ENCODE measurements at regions of chr17 and their contacts with region 1.

Region 1: GRCh38 chr17:48259694-48260291 is 152.2 kb downstream of the SNX11 start:
- H3K4me3 ChIP-seq: no peak overlapping the region
- H3K27ac ChIP-seq: no peak overlapping the region
- H3K4me1 ChIP-seq: peaks cover 6% of the 10 kb centered on the region
- CTCF ChIP-seq: peak; percentile 85

Region 2: GRCh38 chr17:47615766-47616424 is 643.9 kb before region 1 on chr17:
- CTCF ChIA-PET with region 1: no interaction called
- POLR2A ChIA-PET with region 1: no interaction called
- H3K4me3 ChIP-seq: no peak overlapping the region
- H3K27ac ChIP-seq: no peak overlapping the region
- H3K4me1 ChIP-seq: peaks cover 11% of the 10 kb centered on the region
- CTCF ChIP-seq: peak; percentile 41; the same call in 1 of the 2 replicates

Region 3: DNA sequence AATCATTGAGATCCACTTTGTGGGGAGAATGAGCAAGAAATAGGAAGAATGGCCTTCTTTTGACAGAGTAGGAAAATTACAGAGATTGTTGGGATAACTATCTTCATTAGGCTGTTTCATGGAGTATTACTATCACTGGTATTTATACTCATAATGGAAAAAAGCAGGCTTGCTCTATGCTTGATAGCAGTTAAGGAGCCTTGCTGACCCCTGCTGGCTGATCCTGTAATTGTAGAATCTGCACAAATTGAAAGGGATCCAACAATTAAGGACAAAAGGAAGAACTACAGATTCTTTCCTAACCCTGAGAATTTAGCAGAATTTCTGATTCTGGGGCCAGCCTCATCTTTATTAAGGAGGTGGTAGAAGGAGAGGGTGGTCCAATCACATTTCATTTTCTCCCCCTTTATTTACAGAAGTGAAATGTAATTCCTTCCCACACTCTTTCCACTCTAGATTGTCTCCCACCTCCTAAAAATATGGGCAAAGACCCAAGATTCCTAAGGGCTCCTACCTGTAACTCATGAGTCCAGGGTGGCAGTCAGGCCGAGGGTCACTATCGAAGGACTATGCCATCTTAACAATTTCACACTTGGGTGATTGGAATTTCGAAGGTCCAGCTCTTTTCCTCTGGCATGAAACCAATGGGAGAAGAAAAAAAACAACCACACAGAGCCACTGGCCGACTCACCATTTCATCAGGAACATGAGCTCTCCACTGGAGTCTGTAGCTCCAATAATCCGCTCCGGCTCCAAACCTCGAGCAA is 185.3 kb before region 1 on chr17:
- CTCF ChIA-PET with region 1: no interaction called
- POLR2A ChIA-PET with region 1: no interaction called
- H3K4me3 ChIP-seq: no peak overlapping the region
- H3K27ac ChIP-seq: peak overlapping the region; percentile 44; the same call in 1 of the 2 replicates
- H3K4me1 ChIP-seq: no peaks in the 10 kb centered on the region
- CTCF ChIP-seq: peak; percentile 23; the same call in 1 of the 2 replicates

Region 4: DNA sequence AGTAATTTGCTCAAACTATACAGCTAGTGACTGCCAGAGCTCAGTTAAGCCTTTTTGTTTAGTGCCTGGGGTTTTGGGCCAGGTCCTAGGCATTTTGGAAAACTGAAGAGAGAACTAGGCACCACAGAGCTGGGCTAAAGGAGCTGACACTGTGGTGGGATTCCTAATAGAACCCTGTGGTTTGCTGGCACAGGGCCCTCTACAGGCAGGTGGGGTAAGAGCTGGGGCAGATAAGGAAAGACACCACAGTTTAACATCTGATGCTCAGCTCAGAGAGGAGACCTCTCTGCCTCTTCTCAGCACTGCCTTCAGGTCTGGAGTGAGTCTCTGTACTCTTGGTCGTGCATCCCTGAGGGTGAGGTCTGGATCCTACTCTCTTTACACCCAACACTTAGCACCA is 31.1 kb before region 1 on chr17:
- CTCF ChIA-PET with region 1: interaction called, 32 read pairs
- POLR2A ChIA-PET with region 1: no interaction called
- H3K4me3 ChIP-seq: no peak overlapping the region
- H3K27ac ChIP-seq: no peak overlapping the region
- H3K4me1 ChIP-seq: no peaks in the 10 kb centered on the region
- CTCF ChIP-seq: no peak

Region 5: DNA sequence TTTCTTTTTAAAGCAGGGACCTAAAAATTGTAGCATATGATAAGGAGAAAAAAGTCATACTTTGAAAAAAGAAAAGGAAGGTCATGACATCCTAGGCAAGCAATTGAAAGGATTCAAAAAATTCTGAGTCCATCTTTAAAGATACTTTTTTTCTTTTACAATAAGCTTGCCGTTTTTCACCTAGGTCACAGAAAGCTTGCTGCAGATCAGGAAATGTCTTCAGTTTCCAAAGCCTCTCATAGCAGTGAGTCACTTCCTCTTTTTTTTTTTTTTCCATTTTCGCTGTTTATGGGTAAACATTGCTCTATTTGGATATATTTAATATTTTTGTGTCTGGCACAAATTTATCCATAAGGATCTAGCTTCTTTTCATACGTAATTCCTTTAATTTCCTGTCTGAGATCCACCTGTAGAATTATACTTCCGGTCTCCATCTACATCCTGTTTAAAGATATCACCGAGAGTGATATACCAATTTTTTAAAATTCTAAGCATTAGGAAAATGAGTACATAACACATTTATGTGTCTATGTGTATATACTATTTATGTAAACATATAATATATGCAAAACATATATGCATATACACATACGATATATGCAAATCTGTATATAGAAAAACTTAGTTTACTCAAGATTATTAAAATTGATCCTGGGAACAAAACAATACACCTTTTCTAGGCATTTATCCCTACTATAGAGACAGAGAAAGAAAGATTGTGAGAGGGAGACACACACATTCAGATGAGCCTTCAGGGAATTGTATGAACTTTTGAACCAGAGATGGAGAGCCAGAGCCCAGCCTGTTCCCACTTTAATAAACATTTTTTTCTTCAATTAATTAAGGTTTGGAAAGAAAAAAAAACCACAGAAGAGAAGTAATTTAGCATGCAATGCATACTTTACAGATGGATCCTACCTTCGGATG is 35.8 kb after region 1 on chr17:
- CTCF ChIA-PET with region 1: interaction called, 33 read pairs
- POLR2A ChIA-PET with region 1: no interaction called
- H3K4me3 ChIP-seq: no peak overlapping the region
- H3K27ac ChIP-seq: no peak overlapping the region
- H3K4me1 ChIP-seq: peaks cover 3% of the 10 kb centered on the region; the same call in 1 of the 2 replicates
- CTCF ChIP-seq: no peak

Region 6: DNA sequence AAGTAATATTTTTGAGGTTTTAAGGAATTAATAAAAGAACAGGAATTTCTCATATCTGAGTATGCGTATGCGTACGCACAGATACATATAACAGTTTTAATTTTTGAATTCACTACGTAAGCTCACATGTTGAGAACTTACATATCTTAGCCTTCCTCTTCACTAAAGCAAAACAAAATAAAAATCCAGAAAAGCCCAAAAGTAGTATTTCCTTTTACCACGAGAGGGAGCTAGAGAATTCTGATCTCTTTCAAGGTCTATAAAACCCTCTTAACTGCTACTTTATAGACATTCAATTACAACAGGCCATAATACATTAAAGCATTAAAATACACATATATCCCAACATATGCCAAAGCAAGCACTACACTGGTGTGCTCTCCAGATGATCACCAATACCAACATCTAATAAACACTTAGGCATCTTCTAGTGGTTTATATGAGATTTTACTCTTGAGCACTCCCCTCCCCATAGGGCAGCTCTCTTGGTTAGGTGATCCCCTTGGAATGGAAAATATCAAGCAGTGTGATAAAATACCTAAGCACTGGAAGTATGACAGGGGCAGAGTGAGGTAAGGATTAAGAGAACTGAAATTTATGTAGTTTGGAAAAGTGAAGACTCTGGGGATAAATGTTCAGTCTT is 76.2 kb after region 1 on chr17:
- CTCF ChIA-PET with region 1: interaction called, 69 read pairs
- POLR2A ChIA-PET with region 1: no interaction called
- H3K4me3 ChIP-seq: no peak overlapping the region
- H3K27ac ChIP-seq: no peak overlapping the region
- H3K4me1 ChIP-seq: peaks cover 15% of the 10 kb centered on the region; the same call in 1 of the 2 replicates
- CTCF ChIP-seq: no peak

Region 7: DNA sequence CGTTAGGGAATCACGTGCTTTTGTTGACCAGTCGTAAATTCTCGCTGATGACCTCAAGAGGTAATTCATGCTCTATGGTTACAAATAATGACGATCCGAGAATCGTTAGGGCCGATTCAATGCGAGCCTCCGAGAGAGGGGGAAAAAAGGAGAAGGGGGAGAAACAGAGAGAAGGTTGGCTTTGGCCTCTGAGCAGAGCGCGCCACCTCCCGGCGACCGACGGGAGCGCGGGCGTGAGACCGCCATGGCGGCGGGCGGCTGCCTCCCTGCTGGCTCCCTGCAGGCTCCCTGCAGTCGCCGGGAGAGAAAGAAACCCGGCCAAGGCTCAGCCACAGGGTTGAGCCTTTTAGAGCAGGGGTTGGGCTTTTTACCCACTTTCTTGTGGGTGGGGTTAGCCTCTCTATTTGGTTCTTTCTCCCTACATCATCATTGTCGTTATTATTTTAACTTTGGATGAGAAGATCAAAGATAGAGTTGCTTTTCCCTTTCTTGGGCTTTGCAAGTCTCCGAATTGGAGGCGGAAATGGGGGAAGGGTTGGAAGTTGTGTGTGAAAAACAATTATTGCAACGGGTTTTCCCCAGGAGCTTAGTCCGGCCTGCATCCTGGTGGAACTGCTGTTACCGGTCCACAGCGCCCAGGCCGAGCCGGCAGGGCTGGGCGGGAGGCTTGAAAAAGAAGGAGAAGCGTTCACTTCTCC is 334.2 kb after region 1 on chr17:
- CTCF ChIA-PET with region 1: interaction called, 13 read pairs
- POLR2A ChIA-PET with region 1: no interaction called
- H3K4me3 ChIP-seq: no peak overlapping the region; the same call in 1 of the 2 replicates
- H3K27ac ChIP-seq: peak overlapping the region; percentile 68
- H3K4me1 ChIP-seq: peaks cover 31% of the 10 kb centered on the region
- CTCF ChIP-seq: peak; percentile 98

Measured in HEK293 (cell line).